Caco-2 (cell line): ENCODE measurements at regions of chr1 and their contacts with region 1.

Region 1: GRCh38 chr1:23530747-23531561 is at the start of gene E2F2:
- DNase-seq: peak; percentile 84 to 86
- H3K4me3 ChIP-seq: peak within 1 kb of the TSS; percentile 86
- H3K4me3 Mint-ChIP-seq: peak within 1 kb of the TSS; percentile 91
- H3K27ac Mint-ChIP-seq: peak within 1 kb of the TSS; percentile 93
- H3K4me1 ChIP-seq: peaks cover 22% of the 10 kb centered on the region
- H3K4me1 Mint-ChIP-seq: peaks cover 6% of the 10 kb centered on the region
- H3K27me3 ChIP-seq: no peaks in the 10 kb centered on the region
- H3K27me3 Mint-ChIP-seq: no peaks in the 10 kb centered on the region
- CTCF ChIP-seq: no peak
- total RNA-seq, gene E2F2: 9.1 and 9.5 TPM in 2 replicates

Region 2: DNA sequence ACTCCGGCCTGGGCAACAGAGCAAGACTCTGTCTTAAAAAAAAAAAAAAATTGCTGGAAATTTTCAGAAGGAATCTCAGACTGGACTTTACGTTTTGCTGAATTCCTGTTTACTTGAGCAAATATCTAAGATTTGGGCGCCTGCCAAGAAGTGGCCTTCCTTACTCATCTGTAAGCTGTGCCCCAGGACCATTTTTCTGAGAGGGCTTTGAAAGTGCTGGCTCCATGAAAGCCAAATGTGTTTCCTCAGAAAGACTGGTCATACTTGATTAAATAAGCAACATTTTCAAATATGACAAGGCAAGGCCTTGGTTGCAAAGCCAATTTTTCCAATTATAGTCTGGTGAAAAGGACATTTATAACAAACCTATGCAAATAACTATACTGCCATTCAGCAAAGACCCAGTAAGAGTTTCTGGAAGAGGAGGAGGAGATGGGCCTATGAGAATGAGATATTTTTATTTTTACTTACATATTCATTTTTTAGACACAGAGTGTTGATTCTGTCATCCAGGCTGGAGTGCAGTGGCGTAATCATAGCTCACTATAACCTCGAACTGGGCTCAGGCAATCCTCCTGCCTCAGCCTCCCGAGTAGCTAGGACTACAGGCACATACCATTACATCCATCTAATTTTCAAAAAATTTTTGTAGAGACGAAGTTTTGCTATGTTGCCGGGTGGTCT is 257.4 kb before region 1 on chr1:
- CTCF ChIA-PET with region 1: no interaction called
- POLR2A ChIA-PET with region 1: no interaction called
- intact Hi-C with region 1: no loop called
- DNase-seq: no peak
- H3K4me3 ChIP-seq: no peak overlapping the region
- H3K4me3 Mint-ChIP-seq: no peak overlapping the region
- H3K27ac Mint-ChIP-seq: no peak overlapping the region
- H3K4me1 ChIP-seq: no peaks in the 10 kb centered on the region
- H3K4me1 Mint-ChIP-seq: peaks cover under 1% of the 10 kb centered on the region
- H3K27me3 ChIP-seq: no peaks in the 10 kb centered on the region
- H3K27me3 Mint-ChIP-seq: no peaks in the 10 kb centered on the region
- CTCF ChIP-seq: no peak

Region 3: DNA sequence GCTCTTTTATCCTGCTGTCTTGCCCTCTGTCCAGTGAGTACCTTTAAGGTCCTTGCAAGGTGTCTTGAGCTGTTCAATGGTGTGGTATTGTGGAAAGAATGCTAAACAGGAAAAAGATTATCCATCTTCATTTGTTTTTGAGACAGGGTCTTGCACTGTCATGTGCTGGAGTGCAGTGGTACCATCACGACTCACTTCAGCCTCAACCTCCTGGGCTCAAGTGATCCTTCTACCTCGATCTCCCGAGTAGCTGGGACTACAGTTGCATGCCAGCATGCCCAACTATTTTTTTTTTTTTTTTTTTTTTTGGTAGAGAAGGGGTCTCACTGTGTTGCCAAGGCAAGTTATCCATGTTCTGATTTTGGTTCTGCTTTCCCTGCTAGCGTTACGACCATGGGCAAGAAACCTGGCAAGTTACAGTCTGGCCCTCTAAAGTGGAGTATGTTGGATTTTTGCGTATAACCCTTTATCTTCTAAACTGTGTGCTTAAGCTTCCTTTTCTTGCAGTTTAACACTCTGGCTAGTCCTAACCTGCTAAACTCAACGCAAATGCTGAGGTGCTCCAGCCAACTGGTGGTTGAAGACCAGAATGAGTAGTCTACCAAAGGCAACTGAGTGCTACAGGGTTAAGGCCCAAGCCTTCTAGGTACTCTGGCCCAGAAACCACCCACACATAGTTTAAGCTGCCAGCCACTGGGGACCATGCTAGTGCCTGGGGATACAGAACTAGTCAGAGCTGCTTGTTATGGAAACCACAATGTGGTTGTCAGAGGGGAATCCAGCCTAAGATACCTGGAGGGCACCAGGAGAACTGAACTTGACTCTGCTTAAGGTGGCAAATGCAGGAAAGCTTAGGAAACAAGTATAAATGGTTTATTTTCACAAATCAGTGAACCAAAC is 168.6 kb after region 1 on chr1:
- CTCF ChIA-PET with region 1: no interaction called
- POLR2A ChIA-PET with region 1: interaction called, 11 read pairs
- intact Hi-C with region 1: no loop called
- DNase-seq: no peak
- H3K4me3 ChIP-seq: no peak overlapping the region
- H3K4me3 Mint-ChIP-seq: no peak overlapping the region
- H3K27ac Mint-ChIP-seq: no peak overlapping the region
- H3K4me1 ChIP-seq: peaks cover 6% of the 10 kb centered on the region
- H3K4me1 Mint-ChIP-seq: peaks cover 18% of the 10 kb centered on the region
- H3K27me3 ChIP-seq: no peaks in the 10 kb centered on the region
- H3K27me3 Mint-ChIP-seq: no peaks in the 10 kb centered on the region
- CTCF ChIP-seq: no peak